ENCODE measurements at regions of chr9 and their contacts with region 1.

Region 1: DNA sequence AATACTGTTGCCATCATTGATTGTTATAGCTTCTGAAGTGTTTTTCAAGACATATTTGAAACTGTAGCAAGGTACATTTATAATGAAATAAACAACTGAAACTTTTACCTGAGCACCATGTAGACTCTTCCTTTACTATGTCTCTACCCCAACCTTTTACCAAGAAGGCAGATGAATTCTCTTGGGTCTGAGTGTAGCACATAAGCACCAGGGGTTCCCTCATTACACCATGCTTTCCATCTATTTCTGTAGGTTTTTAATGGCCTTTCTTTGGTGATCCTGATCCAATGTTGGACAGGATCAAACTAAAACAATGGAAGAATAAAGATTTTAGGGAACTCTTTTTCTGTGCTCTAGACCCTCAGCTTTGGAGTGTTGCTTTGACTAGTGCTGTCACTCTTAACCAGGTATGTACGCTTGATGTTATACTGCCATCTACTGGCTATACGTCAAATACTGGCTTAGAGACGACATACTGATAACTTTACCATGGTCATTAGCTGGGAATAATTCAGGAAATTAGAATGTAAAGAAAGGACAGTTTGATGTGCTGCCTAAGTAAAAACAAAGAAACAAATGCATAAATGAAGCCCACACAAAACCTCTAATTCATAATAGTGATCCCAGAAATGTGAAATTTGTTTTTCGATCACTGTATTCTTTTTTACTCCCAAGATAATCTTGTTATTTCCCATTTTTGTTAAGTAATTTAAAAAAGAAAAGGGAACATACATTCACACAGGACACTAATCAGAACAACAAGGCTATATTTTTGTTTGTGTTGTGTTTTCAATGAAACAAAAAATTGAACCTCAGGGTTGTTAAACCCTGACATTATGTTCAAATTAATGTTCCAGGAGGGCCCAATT is 30.7 kb downstream of the IFNW1 start:
- DNase-seq: peak; percentile 74
- H3K4me3 ChIP-seq: no peak overlapping the region
- H3K27ac ChIP-seq: no peak overlapping the region
- H3K4me1 ChIP-seq: no peaks in the 10 kb centered on the region
- H3K27me3 ChIP-seq: no peaks in the 10 kb centered on the region
- CTCF ChIP-seq: peak; percentile 57 to 58
- POLR2A ChIP-seq: no peak

Region 2: GRCh38 chr9:19946441-19947109 is 1164.4 kb before region 1 on chr9:
- CTCF ChIA-PET with region 1: interaction called, 14 read pairs
- POLR2A ChIA-PET with region 1: no interaction called
- dilution Hi-C with region 1: no loop called
- intact Hi-C with region 1: no loop called
- DNase-seq: peak; percentile 20
- H3K4me3 ChIP-seq: no peak overlapping the region
- H3K27ac ChIP-seq: no peak overlapping the region
- H3K4me1 ChIP-seq: no peaks in the 10 kb centered on the region
- H3K27me3 ChIP-seq: peaks cover 0 to 9% of the 10 kb centered on the region in 2 experiments
- CTCF ChIP-seq: peak; percentile 22 to 41
- POLR2A ChIP-seq: no peak

Region 3: DNA sequence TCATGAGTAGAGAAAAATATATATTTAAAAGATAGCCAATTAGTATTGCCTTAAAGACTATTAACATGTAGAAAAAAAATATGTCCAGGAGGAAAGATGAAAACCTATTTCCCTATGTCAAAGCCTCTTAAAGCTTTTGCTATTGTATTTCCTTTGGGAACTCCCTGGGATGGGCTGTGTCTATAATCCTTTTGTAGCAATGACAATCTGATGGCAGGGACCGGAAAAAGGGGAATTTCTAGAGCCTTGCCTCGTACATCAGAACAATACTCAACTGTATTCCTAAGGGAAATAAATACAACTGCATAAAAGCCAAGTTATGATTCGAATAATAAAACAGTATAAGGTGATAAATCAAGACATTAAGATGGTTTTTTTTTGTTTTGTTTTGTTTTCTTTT is 746.0 kb before region 1 on chr9:
- CTCF ChIA-PET with region 1: no interaction called
- POLR2A ChIA-PET with region 1: no interaction called
- dilution Hi-C with region 1: no loop called
- intact Hi-C with region 1: no loop called
- DNase-seq: no peak
- H3K4me3 ChIP-seq: no peak overlapping the region
- H3K27ac ChIP-seq: no peak overlapping the region
- H3K4me1 ChIP-seq: no peaks in the 10 kb centered on the region
- H3K27me3 ChIP-seq: no peaks in the 10 kb centered on the region
- CTCF ChIP-seq: no peak
- POLR2A ChIP-seq: no peak

Region 4: GRCh38 chr9:20884985-20885593 is 225.9 kb before region 1 on chr9:
- CTCF ChIA-PET with region 1: interaction called, 123 read pairs
- POLR2A ChIA-PET with region 1: no interaction called
- dilution Hi-C with region 1: no loop called
- intact Hi-C with region 1: loop called (anchors 1 kb)
- DNase-seq: peak; percentile 51
- H3K4me3 ChIP-seq: no peak overlapping the region
- H3K27ac ChIP-seq: no peak overlapping the region
- H3K4me1 ChIP-seq: no peaks in the 10 kb centered on the region
- H3K27me3 ChIP-seq: no peaks in the 10 kb centered on the region
- CTCF ChIP-seq: peak; percentile 44 to 59
- POLR2A ChIP-seq: no peak

Region 5: GRCh38 chr9:20950707-20951106 is 160.2 kb before region 1 on chr9:
- CTCF ChIA-PET with region 1: interaction called, 16 read pairs
- POLR2A ChIA-PET with region 1: no interaction called
- dilution Hi-C with region 1: no loop called
- intact Hi-C with region 1: no loop called
- DNase-seq: no peak
- H3K4me3 ChIP-seq: no peak overlapping the region
- H3K27ac ChIP-seq: no peak overlapping the region
- H3K4me1 ChIP-seq: no peaks in the 10 kb centered on the region
- H3K27me3 ChIP-seq: no peaks in the 10 kb centered on the region
- CTCF ChIP-seq: no peak
- POLR2A ChIP-seq: no peak

Region 6: GRCh38 chr9:21015129-21015815 is 95.7 kb before region 1 on chr9:
- CTCF ChIA-PET with region 1: interaction called, 15 read pairs
- POLR2A ChIA-PET with region 1: no interaction called
- dilution Hi-C with region 1: no loop called
- intact Hi-C with region 1: no loop called
- DNase-seq: peak; percentile 21
- H3K4me3 ChIP-seq: no peak overlapping the region
- H3K27ac ChIP-seq: no peak overlapping the region
- H3K4me1 ChIP-seq: no peaks in the 10 kb centered on the region
- H3K27me3 ChIP-seq: no peaks in the 10 kb centered on the region
- CTCF ChIP-seq: no peak
- POLR2A ChIP-seq: no peak

Region 7: GRCh38 chr9:21096172-21096900 is 14.6 kb before region 1 on chr9:
- CTCF ChIA-PET with region 1: interaction called, 12 read pairs
- POLR2A ChIA-PET with region 1: no interaction called
- dilution Hi-C with region 1: no loop called
- intact Hi-C with region 1: no loop called
- DNase-seq: peak; percentile 40
- H3K4me3 ChIP-seq: no peak overlapping the region
- H3K27ac ChIP-seq: no peak overlapping the region
- H3K4me1 ChIP-seq: peaks cover 7% of the 10 kb centered on the region
- H3K27me3 ChIP-seq: no peaks in the 10 kb centered on the region
- CTCF ChIP-seq: no peak
- POLR2A ChIP-seq: no peak